ENCODE measurements at regions of chr4 and their contacts with region 1.

Region 1: DNA sequence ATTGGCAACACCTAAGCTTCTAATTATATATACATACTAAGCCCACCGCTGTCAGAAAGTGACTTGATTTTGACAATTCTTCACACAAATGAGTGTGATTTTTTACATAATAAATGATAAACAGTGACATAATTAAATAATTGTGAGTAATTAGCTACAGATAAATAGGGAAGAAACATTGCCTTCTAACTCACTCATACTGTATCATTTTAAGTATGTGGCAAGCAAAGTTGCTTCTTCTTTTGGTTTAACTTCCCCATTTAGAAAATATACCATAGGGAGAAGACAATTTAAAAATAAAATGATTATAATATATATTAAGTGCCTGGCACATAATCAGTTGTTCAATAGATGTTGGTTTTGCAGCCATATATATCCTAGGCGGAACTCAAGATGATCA is 644.2 kb downstream of the FSTL5 start:
- DNase-seq: no peak
- H3K4me3 ChIP-seq: no peak overlapping the region
- H3K27ac ChIP-seq: no peak overlapping the region
- H3K4me1 ChIP-seq: no peaks in the 10 kb centered on the region
- H3K27me3 ChIP-seq: no peaks in the 10 kb centered on the region
- CTCF ChIP-seq: no peak

Region 2: DNA sequence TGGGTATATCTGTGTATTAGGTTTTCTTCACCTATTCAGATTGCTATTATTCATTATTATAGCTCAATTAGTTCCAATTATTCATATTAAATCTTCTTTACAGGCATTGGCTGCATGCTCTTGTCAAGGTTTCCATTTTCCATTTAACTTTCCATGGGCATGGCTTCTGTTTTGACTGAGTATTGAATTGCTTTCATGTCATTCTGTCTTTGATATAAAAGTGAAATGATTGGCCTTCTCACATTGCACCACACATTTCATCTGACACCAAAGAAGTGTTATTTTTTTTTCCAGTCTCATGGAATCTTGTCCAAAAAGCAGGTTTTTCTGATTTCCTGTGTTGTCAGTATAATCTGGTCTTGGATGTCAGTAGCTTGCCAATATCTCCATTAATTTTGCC is 1172.4 kb before region 1 on chr4:
- intact Hi-C with region 1: loop called (anchors 10 kb)
- DNase-seq: no peak
- H3K4me3 ChIP-seq: no peak overlapping the region
- H3K27ac ChIP-seq: no peak overlapping the region
- H3K4me1 ChIP-seq: no peaks in the 10 kb centered on the region
- H3K27me3 ChIP-seq: no peaks in the 10 kb centered on the region
- CTCF ChIP-seq: no peak

Region 3: GRCh38 chr4:161457311-161457710 is 62.3 kb before region 1 on chr4:
- intact Hi-C with region 1: no loop called
- DNase-seq: no peak
- H3K4me3 ChIP-seq: no peak overlapping the region
- H3K27ac ChIP-seq: no peak overlapping the region
- H3K4me1 ChIP-seq: no peaks in the 10 kb centered on the region
- H3K27me3 ChIP-seq: no peaks in the 10 kb centered on the region
- CTCF ChIP-seq: no peak

Measured in tibial artery (tissue), 4 donors.